Colonic mucosa (tissue), 4 donors: ENCODE measurements at regions of chr18 and their contacts with region 1.

Region 1: GRCh38 chr18:46481048-46481846 is 175.8 kb downstream of the LOXHD1 start:
- DNase-seq: peak; percentile 45
- H3K4me3 ChIP-seq: no peak overlapping the region
- H3K27ac ChIP-seq: no peak overlapping the region
- H3K4me1 ChIP-seq: no peaks in the 10 kb centered on the region
- H3K27me3 ChIP-seq: no peaks in the 10 kb centered on the region
- CTCF ChIP-seq: peak; percentile 74

Region 2: DNA sequence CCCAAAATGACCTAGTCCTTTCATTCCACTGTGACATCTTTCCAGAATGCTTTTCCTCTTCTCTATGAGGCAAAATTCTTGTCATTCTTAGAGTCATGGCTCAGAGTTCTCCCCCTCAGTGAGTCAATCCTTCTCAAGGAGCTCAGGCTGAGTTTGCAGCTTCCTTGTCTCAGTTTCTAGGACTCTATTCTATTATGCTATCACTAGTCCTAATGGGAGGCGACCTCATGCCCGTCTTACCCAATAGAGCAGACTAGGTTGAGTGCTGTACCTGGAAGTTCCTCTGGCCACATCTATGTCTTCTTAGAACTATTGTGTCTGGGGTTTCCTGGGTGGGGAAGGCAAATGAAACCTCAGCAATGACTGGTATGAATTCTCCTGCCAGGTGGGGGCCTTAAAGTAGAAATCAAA is 325.6 kb before region 1 on chr18:
- intact Hi-C with region 1: loop called (anchors 10 kb)
- DNase-seq: no peak
- H3K4me3 ChIP-seq: no peak overlapping the region
- H3K27ac ChIP-seq: no peak overlapping the region
- H3K4me1 ChIP-seq: no peaks in the 10 kb centered on the region
- H3K27me3 ChIP-seq: no peaks in the 10 kb centered on the region
- CTCF ChIP-seq: no peak

Region 3: DNA sequence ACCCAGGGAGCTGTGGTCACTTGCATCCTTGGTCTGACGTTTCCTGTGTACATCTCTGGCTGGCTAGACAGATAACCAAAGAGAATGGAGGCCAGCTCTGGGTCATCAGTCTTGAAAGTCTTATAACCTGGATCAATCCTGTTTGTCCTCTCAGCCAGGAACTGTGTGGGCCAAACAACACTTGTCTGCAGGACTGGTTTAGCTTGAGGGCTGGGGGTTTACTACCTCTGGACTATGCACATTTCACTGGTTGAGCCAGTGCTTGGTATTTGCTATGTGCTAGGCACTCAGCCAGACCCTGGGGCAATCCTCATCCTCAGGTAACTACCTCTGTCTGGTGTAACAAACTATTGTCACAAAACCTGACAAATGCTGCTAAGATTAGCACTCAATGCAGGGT is 207.4 kb before region 1 on chr18:
- intact Hi-C with region 1: no loop called
- DNase-seq: no peak
- H3K4me3 ChIP-seq: no peak overlapping the region
- H3K27ac ChIP-seq: no peak overlapping the region
- H3K4me1 ChIP-seq: no peaks in the 10 kb centered on the region
- H3K27me3 ChIP-seq: no peaks in the 10 kb centered on the region
- CTCF ChIP-seq: no peak

Region 4: DNA sequence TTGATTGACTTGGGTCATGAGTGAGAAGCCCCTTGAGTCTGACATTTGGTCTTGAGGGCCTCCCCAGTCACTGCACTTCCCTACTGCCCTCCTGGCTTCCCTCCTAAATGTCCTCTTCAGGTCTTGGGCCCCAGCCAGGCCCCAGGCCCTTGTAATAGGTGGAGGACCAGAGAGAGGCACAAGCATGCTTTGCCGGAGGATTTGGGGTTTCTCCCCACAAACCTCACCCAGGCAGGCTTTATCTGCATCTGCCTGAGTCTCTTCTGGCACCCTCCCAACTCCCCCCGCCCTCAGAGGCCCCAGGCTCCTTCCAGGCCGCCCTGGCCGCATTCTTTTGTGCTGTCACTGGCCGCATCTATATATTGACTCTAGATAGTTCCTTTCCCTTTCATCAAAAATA is 106.4 kb before region 1 on chr18:
- intact Hi-C with region 1: no loop called
- DNase-seq: no peak
- H3K4me3 ChIP-seq: no peak overlapping the region
- H3K27ac ChIP-seq: no peak overlapping the region
- H3K4me1 ChIP-seq: no peaks in the 10 kb centered on the region
- H3K27me3 ChIP-seq: no peaks in the 10 kb centered on the region
- CTCF ChIP-seq: no peak

Region 5: GRCh38 chr18:46393230-46393629 is 88.0 kb before region 1 on chr18:
- intact Hi-C with region 1: no loop called
- DNase-seq: no peak
- H3K4me3 ChIP-seq: no peak overlapping the region
- H3K27ac ChIP-seq: no peak overlapping the region
- H3K4me1 ChIP-seq: no peaks in the 10 kb centered on the region
- H3K27me3 ChIP-seq: no peaks in the 10 kb centered on the region
- CTCF ChIP-seq: no peak

Region 6: DNA sequence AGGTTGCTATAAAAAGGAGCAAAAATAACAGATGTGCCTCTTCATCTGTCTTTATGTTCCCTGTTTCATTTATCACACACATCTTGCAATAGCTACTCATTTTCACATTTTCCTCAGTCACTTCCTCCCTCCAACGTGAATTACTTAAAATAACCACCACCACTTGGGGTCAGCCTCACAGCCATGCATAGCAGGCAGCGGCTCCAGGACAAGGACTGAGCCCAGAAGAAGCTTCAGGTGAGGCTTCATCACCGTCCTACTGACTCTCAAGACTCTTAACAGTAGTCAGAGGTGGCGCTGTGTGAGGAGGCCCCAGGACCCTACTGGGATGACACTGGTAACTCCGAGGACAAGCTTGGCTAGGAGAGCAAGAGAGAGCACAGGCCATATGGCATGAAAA is 291.1 kb after region 1 on chr18:
- intact Hi-C with region 1: no loop called
- DNase-seq: no peak
- H3K4me3 ChIP-seq: no peak overlapping the region
- H3K27ac ChIP-seq: no peak overlapping the region
- H3K4me1 ChIP-seq: no peaks in the 10 kb centered on the region
- H3K27me3 ChIP-seq: no peaks in the 10 kb centered on the region
- CTCF ChIP-seq: no peak